HepG2 (cell line): ENCODE measurements at regions of chr3 and their contacts with region 1.

Region 1: GRCh38 chr3:51995346-51996163 is at the start of gene RPL29:
- DNase-seq: peak; percentile 87
- ATAC-seq: peak; percentile 79
- H3K4me3 ChIP-seq: peak within 1 kb of the TSS; percentile 73 to 90 (median 83)
- H3K27ac ChIP-seq: peak within 1 kb of the TSS; percentile 87
- H3K4me1 ChIP-seq: peaks cover 63% of the 10 kb centered on the region
- H3K27me3 ChIP-seq: no peaks in the 10 kb centered on the region; a peak in 1 of 5 replicates
- CTCF ChIP-seq: peak; percentile 49
- EP300 ChIP-seq: peak; percentile 32 to 50; a peak in 2 of 4 replicates
- POLR2A ChIP-seq: peak; percentile 94 to 95
- RAD21 ChIP-seq: peak; percentile 29; the same call in 1 of the 2 replicates
- total RNA-seq, gene RPL29: 1,348 and 1,507 TPM in 2 replicates

Region 2: GRCh38 chr3:51662456-51662855 is 333.1 kb before region 1 on chr3:
- CTCF ChIA-PET with region 1: no interaction called
- POLR2A ChIA-PET with region 1: no interaction called
- in situ Hi-C with region 1: no loop called
- intact Hi-C with region 1: no loop called
- DNase-seq: no peak
- ATAC-seq: no peak
- H3K4me3 ChIP-seq: no peak overlapping the region
- H3K27ac ChIP-seq: no peak overlapping the region
- H3K4me1 ChIP-seq: no peaks in the 10 kb centered on the region; the same call in 1 of the 2 replicates
- H3K27me3 ChIP-seq: no peaks in the 10 kb centered on the region
- CTCF ChIP-seq: no peak
- EP300 ChIP-seq: no peak
- POLR2A ChIP-seq: no peak
- RAD21 ChIP-seq: no peak

Region 3: DNA sequence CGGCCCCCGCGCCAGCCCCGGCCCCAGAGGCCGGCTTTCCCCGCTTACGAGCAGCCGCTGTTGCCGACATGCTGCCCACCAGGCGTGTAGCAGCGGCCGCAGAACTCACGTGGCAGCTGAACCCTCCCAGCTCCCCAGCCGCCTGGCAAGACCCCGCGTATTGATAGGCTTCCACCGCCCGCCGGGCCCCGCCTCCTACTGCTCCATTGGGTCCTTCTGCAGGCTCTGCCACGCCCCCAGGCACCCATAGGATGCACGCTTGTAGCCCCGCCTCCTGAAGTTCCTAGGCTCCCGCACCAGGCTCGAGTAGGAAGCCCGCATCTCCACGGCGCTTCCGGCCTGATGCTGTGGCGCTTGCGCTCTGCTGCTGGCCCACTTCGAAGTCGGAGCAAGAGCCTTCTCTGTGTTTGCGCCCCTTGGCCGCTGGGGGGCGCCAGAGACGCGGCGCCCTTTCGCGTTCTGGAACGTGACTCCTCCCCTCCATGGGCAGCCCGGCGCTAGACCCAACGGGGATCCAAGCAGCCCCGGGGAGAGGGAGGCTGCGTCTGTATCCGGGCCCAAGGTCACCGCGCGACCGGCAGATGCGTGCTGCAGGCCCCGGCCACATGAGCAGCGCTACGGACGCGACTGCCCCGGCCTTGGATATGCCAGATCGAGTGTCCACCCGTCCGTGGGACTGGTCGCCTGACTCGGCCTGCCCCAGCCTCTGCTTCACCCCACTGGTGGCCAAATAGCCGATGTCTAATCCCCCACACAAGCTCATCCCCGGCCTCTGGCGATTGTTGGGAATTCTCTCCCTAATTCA is 53.6 kb before region 1 on chr3 and contains the starts of genes PARP3 and RRP9:
- CTCF ChIA-PET with region 1: interaction called, 8 read pairs
- POLR2A ChIA-PET with region 1: interaction called, 64 read pairs
- in situ Hi-C with region 1: no loop called
- intact Hi-C with region 1: loop called (anchors 2 kb)
- DNase-seq: peak; percentile 99
- ATAC-seq: peak; percentile 88
- H3K4me3 ChIP-seq: peak within 1 kb of the TSS; percentile 80 to 88 (median 84)
- H3K27ac ChIP-seq: peak within 1 kb of the TSS; percentile 93
- H3K4me1 ChIP-seq: peaks cover 33% of the 10 kb centered on the region
- H3K27me3 ChIP-seq: no peaks in the 10 kb centered on the region; a peak in 1 of 5 replicates
- CTCF ChIP-seq: peak; percentile 100
- EP300 ChIP-seq: peak in 1 of 2 experiments; percentile 20; a peak in 1 of 4 replicates
- POLR2A ChIP-seq: peak in 1 of 2 experiments; percentile 45; a peak in 1 of 4 replicates
- RAD21 ChIP-seq: peak; percentile 99
- total RNA-seq, gene PARP3: 7.7 and 11.2 TPM in 2 replicates
- total RNA-seq, gene RRP9: 39.4 and 44.0 TPM in 2 replicates

Region 4: GRCh38 chr3:51967384-51968169 is 28.0 kb before region 1 on chr3 and contains the start of gene PCBP4:
- CTCF ChIA-PET with region 1: no interaction called
- POLR2A ChIA-PET with region 1: interaction called, 46 read pairs
- in situ Hi-C with region 1: no loop called
- intact Hi-C with region 1: no loop called
- DNase-seq: peak; percentile 70
- ATAC-seq: peak; percentile 76
- H3K4me3 ChIP-seq: peak within 1 kb of the TSS; percentile 72 to 89 (median 87)
- H3K27ac ChIP-seq: peak within 1 kb of the TSS; percentile 81
- H3K4me1 ChIP-seq: peaks cover 89% of the 10 kb centered on the region
- H3K27me3 ChIP-seq: no peaks in the 10 kb centered on the region
- CTCF ChIP-seq: no peak
- EP300 ChIP-seq: no peak
- POLR2A ChIP-seq: peak in 1 of 2 experiments; percentile 41; a peak in 1 of 4 replicates
- RAD21 ChIP-seq: no peak; the same call in 1 of the 2 replicates
- total RNA-seq, gene PCBP4: 32.5 and 36.8 TPM in 2 replicates

Region 5: GRCh38 chr3:51974963-51975851 is 20.3 kb before region 1 on chr3 and contains the start of gene ABHD14A:
- CTCF ChIA-PET with region 1: no interaction called
- POLR2A ChIA-PET with region 1: interaction called, 46 read pairs
- in situ Hi-C with region 1: no loop called
- intact Hi-C with region 1: no loop called
- DNase-seq: peak; percentile 37
- ATAC-seq: peak; percentile 81
- H3K4me3 ChIP-seq: peak within 1 kb of the TSS; percentile 75 to 82 (median 77)
- H3K27ac ChIP-seq: peak within 1 kb of the TSS; percentile 97
- H3K4me1 ChIP-seq: peaks cover 45% of the 10 kb centered on the region
- H3K27me3 ChIP-seq: no peaks in the 10 kb centered on the region; a peak in 1 of 5 replicates
- CTCF ChIP-seq: no peak; the same call in 1 of the 2 replicates
- EP300 ChIP-seq: no peak
- POLR2A ChIP-seq: peak in 1 of 2 experiments; percentile 60; a peak in 2 of 4 replicates
- RAD21 ChIP-seq: peak; percentile 60
- total RNA-seq, gene ABHD14A: 12.3 and 29.5 TPM in 2 replicates

Region 6: DNA sequence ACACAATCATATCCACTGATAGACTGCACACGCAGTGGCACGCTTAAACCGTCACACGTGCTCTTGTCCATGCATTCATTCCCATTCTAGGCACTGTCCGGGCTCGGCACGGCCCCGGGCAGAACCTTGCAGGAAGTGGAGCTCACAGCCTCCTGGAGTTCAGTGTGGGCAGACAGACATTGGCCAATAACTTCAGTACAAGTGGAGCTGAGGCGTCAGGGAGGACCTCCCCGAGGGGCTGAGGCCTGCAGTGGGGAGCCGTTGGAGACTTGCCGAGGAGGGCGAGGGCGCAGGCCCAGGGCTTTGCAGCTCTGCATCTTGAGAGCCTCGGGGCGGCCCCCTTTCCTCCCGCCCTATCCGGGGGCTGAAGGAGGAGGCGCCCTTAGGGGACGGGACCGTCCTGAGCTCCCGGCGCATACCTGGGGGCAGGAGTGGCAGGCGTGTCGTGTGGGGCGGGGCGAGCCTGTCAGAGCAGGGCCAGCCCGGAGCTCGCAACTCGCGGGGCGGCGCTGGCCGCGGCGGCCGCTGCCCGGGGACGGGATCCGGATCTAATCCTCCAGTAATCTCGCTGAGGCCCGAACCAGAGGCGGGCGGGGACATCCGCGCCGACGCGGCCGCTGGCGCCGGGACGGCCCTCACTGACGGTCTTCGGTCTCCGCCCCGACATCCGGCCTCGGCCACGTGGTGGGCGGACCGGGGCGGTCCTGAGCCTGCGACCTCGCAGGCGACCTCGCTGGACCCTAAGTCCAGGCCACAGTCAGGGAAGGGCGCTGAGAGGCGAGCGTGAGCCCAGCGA is 12.6 kb before region 1 on chr3 and contains the start of gene ACY1:
- CTCF ChIA-PET with region 1: no interaction called
- POLR2A ChIA-PET with region 1: interaction called, 187 read pairs
- in situ Hi-C with region 1: no loop called
- intact Hi-C with region 1: no loop called
- DNase-seq: peak; percentile 87
- ATAC-seq: peak; percentile 80
- H3K4me3 ChIP-seq: peak within 1 kb of the TSS; percentile 70 to 83 (median 73)
- H3K27ac ChIP-seq: peak within 1 kb of the TSS; percentile 94
- H3K4me1 ChIP-seq: peaks cover 51% of the 10 kb centered on the region
- H3K27me3 ChIP-seq: no peaks in the 10 kb centered on the region
- CTCF ChIP-seq: peak; percentile 3; the same call in 1 of the 2 replicates
- EP300 ChIP-seq: peak; percentile 19 to 73; a peak in 3 of 4 replicates
- POLR2A ChIP-seq: no peak; a peak in 1 of 4 replicates
- RAD21 ChIP-seq: 0 out of 2 replicates have a peak, but pooled peaks have one; percentile 3
- total RNA-seq, gene ACY1: 112 and 113 TPM in 2 replicates

Region 7: GRCh38 chr3:52190294-52191074 is 194.9 kb after region 1 on chr3:
- CTCF ChIA-PET with region 1: no interaction called
- POLR2A ChIA-PET with region 1: no interaction called
- in situ Hi-C with region 1: no loop called
- intact Hi-C with region 1: no loop called
- DNase-seq: no peak
- ATAC-seq: no peak; the same call in 2 of the 3 replicates
- H3K4me3 ChIP-seq: no peak overlapping the region
- H3K27ac ChIP-seq: no peak overlapping the region
- H3K4me1 ChIP-seq: peaks cover 51% of the 10 kb centered on the region
- H3K27me3 ChIP-seq: peaks cover 0 to 6% of the 10 kb centered on the region in 2 experiments; a peak in 1 of 5 replicates
- CTCF ChIP-seq: no peak
- EP300 ChIP-seq: no peak
- POLR2A ChIP-seq: no peak
- RAD21 ChIP-seq: no peak